ENCODE measurements at regions of chr1 and their contacts with region 1.

Region 1: DNA sequence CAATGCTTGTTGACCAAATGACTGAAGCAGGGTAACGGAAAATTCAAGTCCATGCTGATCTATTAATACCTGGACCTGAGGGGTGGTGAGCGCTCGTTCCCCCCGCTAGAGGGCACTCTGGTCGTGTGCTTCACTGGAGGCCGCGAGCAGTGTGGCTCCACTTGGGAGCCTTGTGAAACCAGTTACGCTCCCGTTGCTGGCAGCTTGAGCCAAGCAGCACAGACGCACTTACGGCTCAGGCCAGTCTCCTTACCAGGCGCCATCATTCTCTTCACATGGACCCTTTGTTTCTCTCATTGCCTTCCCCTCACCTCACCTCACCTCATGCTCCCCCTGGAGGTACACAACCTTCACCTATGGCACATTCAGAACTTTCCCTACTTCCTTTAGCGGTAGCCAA is 49.7 kb upstream of the TSPAN2 start:
- DNase-seq: peak; percentile 33 to 80 (median 45)
- ATAC-seq: peak; percentile 81
- H3K4me3 ChIP-seq: peak overlapping the region; percentile 13
- H3K4me3 Mint-ChIP-seq: peak overlapping the region; percentile 39
- H3K27ac ChIP-seq: no peak overlapping the region
- H3K27ac Mint-ChIP-seq: no peak overlapping the region
- H3K4me1 ChIP-seq: peaks cover 6% of the 10 kb centered on the region
- H3K4me1 Mint-ChIP-seq: no peaks in the 10 kb centered on the region
- H3K27me3 ChIP-seq: peaks cover 6 to 7% of the 10 kb centered on the region in 2 experiments
- H3K27me3 Mint-ChIP-seq: peaks cover 38% of the 10 kb centered on the region
- CTCF ChIP-seq: peak; percentile 76

Region 2: GRCh38 chr1:115469703-115470476 is 330.9 kb after region 1 on chr1:
- CTCF ChIA-PET with region 1: no interaction called
- POLR2A ChIA-PET with region 1: no interaction called
- intact Hi-C with region 1: loop called (anchors 2 to 5 kb)
- DNase-seq: peak in 6 of 14 experiments; percentile 3 to 39 (median 8)
- ATAC-seq: no peak
- H3K4me3 ChIP-seq: no peak overlapping the region
- H3K4me3 Mint-ChIP-seq: no peak overlapping the region
- H3K27ac ChIP-seq: no peak overlapping the region
- H3K27ac Mint-ChIP-seq: no peak overlapping the region
- H3K4me1 ChIP-seq: no peaks in the 10 kb centered on the region
- H3K4me1 Mint-ChIP-seq: no peaks in the 10 kb centered on the region
- H3K27me3 ChIP-seq: peaks cover 0 to 3% of the 10 kb centered on the region in 2 experiments
- H3K27me3 Mint-ChIP-seq: peaks cover 10% of the 10 kb centered on the region
- CTCF ChIP-seq: peak; percentile 57

Region 3: DNA sequence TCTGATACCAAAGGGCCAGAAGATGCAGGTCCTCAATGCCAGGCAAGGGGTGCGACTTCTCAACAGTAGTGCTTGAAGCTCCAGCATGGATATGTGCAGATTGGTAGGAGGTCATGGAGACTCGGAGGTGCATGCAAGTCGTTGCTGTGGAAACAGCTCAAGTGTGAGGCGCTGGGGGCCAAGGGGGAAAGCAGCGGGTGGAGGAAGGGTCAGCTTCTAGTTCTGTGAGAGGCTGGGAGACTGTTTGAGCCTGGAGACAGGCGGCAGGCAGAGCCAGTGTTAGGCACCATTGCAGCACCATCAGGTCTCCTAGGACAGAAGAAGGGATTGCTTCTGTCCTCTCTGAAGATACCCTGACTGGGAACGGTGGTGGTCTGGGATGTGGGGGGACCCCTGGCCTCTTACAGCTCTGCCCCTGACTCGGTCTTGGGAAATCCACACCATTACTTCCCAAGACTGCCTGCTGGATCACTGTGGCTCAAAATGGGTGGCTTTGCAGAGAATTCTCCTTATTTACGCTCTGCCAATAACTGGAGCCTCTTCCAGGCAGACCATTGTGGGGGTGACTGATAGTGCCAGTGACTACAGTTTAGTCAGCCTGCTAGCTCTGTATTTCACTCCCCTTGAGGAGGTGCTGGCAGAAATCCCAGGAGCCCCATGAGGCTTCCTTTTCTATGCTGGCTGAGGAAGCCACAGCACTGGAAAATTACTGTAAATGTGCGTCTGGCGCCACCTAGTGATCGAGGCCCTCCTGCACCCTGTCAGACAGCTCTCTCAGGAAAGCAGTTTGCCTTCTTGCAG is 456.5 kb after region 1 on chr1:
- CTCF ChIA-PET with region 1: no interaction called
- POLR2A ChIA-PET with region 1: no interaction called
- intact Hi-C with region 1: loop called in 1 of 2 experiments (anchors 2 kb)
- DNase-seq: peak; percentile 15 to 68 (median 39)
- ATAC-seq: peak; percentile 51
- H3K4me3 ChIP-seq: no peak overlapping the region
- H3K4me3 Mint-ChIP-seq: no peak overlapping the region
- H3K27ac ChIP-seq: no peak overlapping the region
- H3K27ac Mint-ChIP-seq: no peak overlapping the region
- H3K4me1 ChIP-seq: no peaks in the 10 kb centered on the region
- H3K4me1 Mint-ChIP-seq: no peaks in the 10 kb centered on the region
- H3K27me3 ChIP-seq: no peaks in the 10 kb centered on the region
- H3K27me3 Mint-ChIP-seq: no peaks in the 10 kb centered on the region
- CTCF ChIP-seq: peak; percentile 67

Region 4: GRCh38 chr1:116020668-116021275 is 881.8 kb after region 1 on chr1:
- CTCF ChIA-PET with region 1: no interaction called
- POLR2A ChIA-PET with region 1: no interaction called
- intact Hi-C with region 1: loop called in 1 of 2 experiments (anchors 2 kb)
- DNase-seq: peak in 12 of 14 experiments; percentile 2 to 66 (median 26)
- ATAC-seq: no peak
- H3K4me3 ChIP-seq: no peak overlapping the region
- H3K4me3 Mint-ChIP-seq: no peak overlapping the region
- H3K27ac ChIP-seq: no peak overlapping the region
- H3K27ac Mint-ChIP-seq: no peak overlapping the region
- H3K4me1 ChIP-seq: no peaks in the 10 kb centered on the region
- H3K4me1 Mint-ChIP-seq: no peaks in the 10 kb centered on the region
- H3K27me3 ChIP-seq: peaks cover 0 to 3% of the 10 kb centered on the region in 2 experiments
- H3K27me3 Mint-ChIP-seq: peaks cover 10% of the 10 kb centered on the region
- CTCF ChIP-seq: peak; percentile 63